CD4-positive, alpha-beta T cell (primary cell): ENCODE measurements at regions of chr6 and their contacts with region 1.

Region 1: DNA sequence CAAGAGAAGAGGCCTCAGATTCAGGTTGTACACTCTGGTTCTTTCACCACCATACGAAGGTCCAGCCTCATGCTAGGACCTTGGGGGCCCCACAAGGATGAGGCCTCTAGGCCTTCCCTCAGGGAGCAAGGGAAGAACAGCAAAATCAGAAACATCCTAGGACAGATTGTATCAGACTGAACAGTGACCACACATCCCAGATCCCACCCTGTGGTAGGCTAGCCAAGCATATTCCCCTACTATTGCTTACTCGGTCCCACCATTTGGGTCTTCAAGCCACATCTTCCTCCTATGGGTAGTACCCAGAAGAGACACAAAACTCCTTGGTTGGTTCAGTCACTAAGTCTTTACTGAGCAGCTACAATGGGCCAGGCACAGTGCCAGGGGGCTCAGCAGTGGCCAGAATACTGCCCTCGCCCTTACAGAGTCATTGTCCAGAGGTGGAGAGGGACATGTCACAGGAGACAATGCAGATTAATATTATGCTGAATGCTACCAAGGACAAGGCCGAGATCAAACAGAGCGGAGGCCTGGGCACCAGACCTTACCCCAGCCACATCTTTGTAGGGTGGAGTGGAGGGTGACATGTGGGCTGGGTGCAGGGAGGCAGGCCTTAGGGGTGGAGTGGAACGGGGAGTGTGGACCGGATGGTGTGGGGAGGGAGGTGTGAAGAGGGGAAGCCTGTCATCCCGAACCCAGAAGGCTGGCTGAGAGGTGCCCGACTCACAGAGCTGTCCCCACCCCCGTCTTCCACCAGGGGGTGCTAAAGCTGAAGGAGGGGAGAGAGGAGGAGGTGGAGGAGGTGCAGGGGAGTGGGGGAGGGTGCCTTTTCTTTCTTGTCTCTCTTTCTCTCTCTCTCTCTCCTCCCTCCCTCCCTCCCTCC is 6.8 kb upstream of the MAPK13 start:
- DNase-seq: peak; percentile 78 to 97 (median 86)
- ATAC-seq: peak; percentile 75
- H3K4me3 ChIP-seq: no peak overlapping the region
- H3K4me3 Mint-ChIP-seq: peak overlapping the region; percentile 78
- H3K27ac ChIP-seq: peak overlapping the region; percentile 43 to 71
- H3K27ac Mint-ChIP-seq: peak overlapping the region; percentile 97
- H3K4me1 ChIP-seq: peaks cover 94% of the 10 kb centered on the region
- H3K4me1 Mint-ChIP-seq: peaks cover 82% of the 10 kb centered on the region
- H3K27me3 ChIP-seq: no peaks in the 10 kb centered on the region
- H3K27me3 Mint-ChIP-seq: no peaks in the 10 kb centered on the region
- CTCF ChIP-seq: peak; percentile 63

Region 2: GRCh38 chr6:36099872-36100483 is 23.5 kb before region 1 on chr6:
- CTCF ChIA-PET with region 1: interaction called, 16 read pairs
- POLR2A ChIA-PET with region 1: interaction called, 26 read pairs
- intact Hi-C with region 1: no loop called
- DNase-seq: peak in 7 of 14 experiments; percentile 35 to 84 (median 57)
- ATAC-seq: peak; percentile 90
- H3K4me3 ChIP-seq: no peak overlapping the region
- H3K4me3 Mint-ChIP-seq: peak overlapping the region; percentile 17
- H3K27ac ChIP-seq: peak overlapping the region; percentile 1 to 18
- H3K27ac Mint-ChIP-seq: peak overlapping the region; percentile 89
- H3K4me1 ChIP-seq: peaks cover 29% of the 10 kb centered on the region
- H3K4me1 Mint-ChIP-seq: peaks cover 64% of the 10 kb centered on the region
- H3K27me3 ChIP-seq: no peaks in the 10 kb centered on the region
- H3K27me3 Mint-ChIP-seq: no peaks in the 10 kb centered on the region
- CTCF ChIP-seq: no peak

Region 3: GRCh38 chr6:36171573-36171972 is 48.1 kb after region 1 on chr6:
- CTCF ChIA-PET with region 1: no interaction called
- POLR2A ChIA-PET with region 1: no interaction called
- intact Hi-C with region 1: no loop called
- DNase-seq: no peak
- ATAC-seq: no peak
- H3K4me3 ChIP-seq: no peak overlapping the region
- H3K4me3 Mint-ChIP-seq: no peak overlapping the region
- H3K27ac ChIP-seq: no peak overlapping the region
- H3K27ac Mint-ChIP-seq: no peak overlapping the region
- H3K4me1 ChIP-seq: no peaks in the 10 kb centered on the region
- H3K4me1 Mint-ChIP-seq: no peaks in the 10 kb centered on the region
- H3K27me3 ChIP-seq: no peaks in the 10 kb centered on the region
- H3K27me3 Mint-ChIP-seq: no peaks in the 10 kb centered on the region
- CTCF ChIP-seq: no peak

Region 4: DNA sequence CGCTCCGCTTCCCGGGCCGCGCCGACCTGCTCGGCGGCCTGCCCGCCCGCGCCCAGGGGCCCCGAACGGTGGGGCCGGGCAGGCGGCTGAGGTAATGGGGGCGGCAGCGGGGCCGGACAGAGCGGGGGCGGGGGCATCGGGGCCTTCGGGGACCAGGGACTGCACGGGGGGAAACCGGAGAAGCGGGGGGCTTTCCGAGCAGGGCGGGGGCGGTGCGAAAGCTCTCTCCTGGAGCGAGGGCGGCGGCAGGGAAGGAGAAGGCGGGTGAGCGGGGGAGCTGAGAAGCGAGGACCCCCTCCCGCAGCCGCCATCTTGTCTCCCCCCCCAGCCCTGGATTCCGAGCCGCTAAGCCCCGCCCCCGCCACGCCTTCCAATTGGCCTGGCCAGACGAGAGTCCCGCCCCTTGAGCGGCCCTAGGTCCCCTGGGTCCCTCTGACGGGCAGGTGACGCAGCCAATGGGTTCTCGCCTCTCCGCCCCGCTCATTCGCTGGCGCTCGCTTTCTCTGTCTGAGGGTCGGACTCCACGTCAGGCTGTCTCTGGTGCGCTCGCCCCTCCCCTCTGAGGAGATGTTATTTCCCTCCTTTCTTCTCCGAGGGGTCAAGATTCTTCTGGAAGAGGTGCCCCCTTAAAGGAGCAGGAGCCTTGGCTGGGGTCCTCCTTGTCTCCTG is 73.5 kb after region 1 on chr6:
- CTCF ChIA-PET with region 1: interaction called, 3 read pairs
- POLR2A ChIA-PET with region 1: interaction called, 13 read pairs
- intact Hi-C with region 1: loop called (anchors 1 kb)
- DNase-seq: peak; percentile 99 to 100 (median 100)
- ATAC-seq: peak; percentile 87
- H3K4me3 ChIP-seq: peak overlapping the region; percentile 68
- H3K4me3 Mint-ChIP-seq: peak overlapping the region; percentile 96
- H3K27ac ChIP-seq: peak overlapping the region; percentile 65 to 79
- H3K27ac Mint-ChIP-seq: peak overlapping the region; percentile 96
- H3K4me1 ChIP-seq: peaks cover 48% of the 10 kb centered on the region
- H3K4me1 Mint-ChIP-seq: peaks cover 61% of the 10 kb centered on the region
- H3K27me3 ChIP-seq: no peaks in the 10 kb centered on the region
- H3K27me3 Mint-ChIP-seq: no peaks in the 10 kb centered on the region
- CTCF ChIP-seq: no peak

Region 5: GRCh38 chr6:36302227-36302976 is 178.9 kb after region 1 on chr6:
- CTCF ChIA-PET with region 1: interaction called, 5 read pairs
- POLR2A ChIA-PET with region 1: no interaction called
- intact Hi-C with region 1: loop called in 1 of 2 experiments (anchors 5 kb)
- DNase-seq: peak; percentile 78 to 97 (median 92)
- ATAC-seq: peak; percentile 99
- H3K4me3 ChIP-seq: no peak overlapping the region
- H3K4me3 Mint-ChIP-seq: no peak overlapping the region
- H3K27ac ChIP-seq: no peak overlapping the region
- H3K27ac Mint-ChIP-seq: no peak overlapping the region
- H3K4me1 ChIP-seq: peaks cover 8% of the 10 kb centered on the region
- H3K4me1 Mint-ChIP-seq: peaks cover 7% of the 10 kb centered on the region
- H3K27me3 ChIP-seq: no peaks in the 10 kb centered on the region
- H3K27me3 Mint-ChIP-seq: peaks cover 16% of the 10 kb centered on the region
- CTCF ChIP-seq: peak; percentile 99